Gastrocnemius medialis (tissue), 4 donors: ENCODE measurements at regions of chr17 and their contacts with region 1.

Region 1: GRCh38 chr17:44919885-44920564 is 4.7 kb upstream of the GFAP start:
- DNase-seq: peak; percentile 66 to 73
- ATAC-seq: peak; percentile 91 to 92
- H3K4me3 ChIP-seq: no peak overlapping the region
- H3K27ac ChIP-seq: no peak overlapping the region
- H3K4me1 ChIP-seq: peaks cover 0 to 8% of the 10 kb centered on the region in 2 donors
- H3K27me3 ChIP-seq: no peaks in the 10 kb centered on the region
- CTCF ChIP-seq: peak; percentile 70 to 88 (median 81)
- POLR2A ChIP-seq: no peak

Region 2: DNA sequence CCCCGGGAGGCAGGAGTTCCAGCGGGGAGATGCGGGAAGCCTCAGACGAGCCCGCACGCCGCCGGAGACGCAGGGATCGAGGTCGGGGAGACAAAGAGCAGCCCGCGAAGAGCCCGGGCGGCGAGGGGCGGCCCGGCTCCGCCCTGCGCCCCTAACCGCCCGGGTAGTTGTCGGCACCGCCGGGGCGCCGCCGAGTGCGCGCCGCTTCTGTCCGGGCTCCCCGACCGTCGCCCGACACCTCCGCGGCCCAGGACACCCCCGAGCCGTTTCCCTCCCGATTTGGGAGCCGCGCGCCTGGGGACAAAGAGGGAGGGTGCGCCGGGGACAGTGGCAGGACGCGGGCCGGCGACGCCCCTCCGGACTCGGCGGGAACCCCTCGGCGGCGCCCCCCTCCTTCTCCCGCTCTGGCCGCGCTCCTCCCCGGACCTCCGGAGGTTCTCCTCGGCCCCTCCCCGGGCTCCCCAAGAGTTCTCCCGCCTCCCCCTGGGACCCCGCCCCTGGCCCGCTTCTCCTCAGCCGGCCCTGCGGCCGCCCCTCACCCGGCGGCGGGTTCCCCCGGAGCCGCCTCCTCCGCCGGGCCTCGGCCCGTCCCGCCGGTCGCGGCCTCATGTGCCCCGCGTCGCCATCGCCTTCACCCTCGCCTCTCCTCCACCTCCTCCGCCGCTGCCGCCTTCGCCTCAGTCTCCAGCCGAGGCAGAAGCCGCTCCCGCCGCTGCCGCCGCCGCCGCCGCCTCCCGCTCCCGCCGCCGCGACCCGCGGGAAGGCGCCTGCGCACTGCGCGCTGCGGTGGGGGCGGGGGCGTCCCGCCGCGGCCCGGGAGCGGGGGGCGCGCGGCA is 90.3 kb before region 1 on chr17 and contains the start of gene GJC1:
- in situ Hi-C with region 1: no loop called
- intact Hi-C with region 1: no loop called
- DNase-seq: no peak
- ATAC-seq: no peak
- H3K4me3 ChIP-seq: peak within 1 kb of the TSS; percentile 48 to 56 (median 52)
- H3K27ac ChIP-seq: peak within 1 kb of the TSS; percentile 50 to 66 (median 54)
- H3K4me1 ChIP-seq: peaks cover 0 to 7% of the 10 kb centered on the region in 2 donors
- H3K27me3 ChIP-seq: peaks cover 60 to 78% (median 72%) of the 10 kb centered on the region in 3 donors
- CTCF ChIP-seq: no peak
- POLR2A ChIP-seq: no peak
- total RNA-seq, gene GJC1: 2.1 to 9.2 (median 4.6) TPM

Region 3: DNA sequence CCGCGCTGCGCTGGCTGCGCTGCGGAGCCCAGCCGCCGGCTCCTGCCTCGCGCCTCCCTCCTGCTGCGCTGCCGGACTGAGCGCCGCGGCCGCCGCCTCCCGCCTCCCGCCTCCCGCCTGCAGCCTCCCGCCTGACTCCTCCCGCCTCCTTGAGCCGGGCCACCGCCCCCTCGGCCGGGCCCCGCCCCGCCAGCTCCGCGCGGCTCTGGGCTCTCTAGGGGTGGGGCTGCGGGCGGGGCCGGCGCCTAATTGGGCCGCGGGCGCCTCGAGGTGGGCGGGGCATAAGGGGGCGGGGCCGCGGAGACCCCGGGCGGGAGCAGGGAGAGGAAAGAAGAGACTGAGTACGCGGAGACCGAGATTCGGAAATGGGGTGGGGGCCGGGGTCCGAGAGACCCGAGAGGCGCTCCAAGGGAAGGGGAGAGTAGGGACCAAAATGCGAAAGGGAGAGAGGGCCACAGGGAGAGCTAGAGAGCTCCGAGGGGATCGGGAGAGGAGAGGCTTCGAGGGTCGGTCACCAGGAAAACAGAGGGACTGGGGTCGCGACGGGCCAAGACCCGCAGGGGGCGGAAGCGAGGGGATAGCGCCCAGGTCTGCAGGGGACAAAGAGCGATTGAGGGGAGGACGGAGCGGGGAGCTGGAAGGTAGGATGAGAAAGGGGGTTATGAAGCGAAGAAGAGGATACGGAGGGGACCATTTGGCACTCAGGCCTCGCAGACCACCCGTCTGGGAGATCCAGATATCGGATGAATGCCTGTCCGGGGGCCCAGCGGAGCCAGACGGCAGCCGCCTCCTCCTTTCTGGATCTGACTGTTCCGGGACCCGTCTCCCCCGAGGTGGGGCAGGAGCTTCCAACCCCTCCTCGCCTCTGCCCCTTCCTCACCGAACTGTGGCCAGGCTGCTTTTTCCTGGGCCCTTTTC is 48.5 kb after region 1 on chr17 and contains the start of gene C1QL1:
- in situ Hi-C with region 1: no loop called
- intact Hi-C with region 1: no loop called
- DNase-seq: peak; percentile 74 to 83
- ATAC-seq: peak; percentile 90 to 94
- H3K4me3 ChIP-seq: peak within 1 kb of the TSS; percentile 28 to 68 (median 50)
- H3K27ac ChIP-seq: no peak within 1 kb of the TSS
- H3K4me1 ChIP-seq: peaks cover 0 to 12% of the 10 kb centered on the region in 2 donors
- H3K27me3 ChIP-seq: peaks cover 45 to 53% (median 50%) of the 10 kb centered on the region in 3 donors
- CTCF ChIP-seq: no peak
- POLR2A ChIP-seq: no peak
- total RNA-seq, gene C1QL1: not detected

Region 4: GRCh38 chr17:45021607-45022287 is 101.7 kb after region 1 on chr17:
- in situ Hi-C with region 1: loop called in 3 of 4 experiments (anchors 5 to 10 kb)
- intact Hi-C with region 1: loop called (anchors 1 kb)
- DNase-seq: peak; percentile 23 to 47
- ATAC-seq: peak; percentile 70 to 81
- H3K4me3 ChIP-seq: peak overlapping the region; percentile 50 to 83 (median 54)
- H3K27ac ChIP-seq: peak overlapping the region; percentile 32 to 66 (median 64)
- H3K4me1 ChIP-seq: peaks cover 16 to 17% of the 10 kb centered on the region in 2 donors
- H3K27me3 ChIP-seq: no peaks in the 10 kb centered on the region
- CTCF ChIP-seq: peak; percentile 71 to 97 (median 96)
- POLR2A ChIP-seq: no peak

Region 5: DNA sequence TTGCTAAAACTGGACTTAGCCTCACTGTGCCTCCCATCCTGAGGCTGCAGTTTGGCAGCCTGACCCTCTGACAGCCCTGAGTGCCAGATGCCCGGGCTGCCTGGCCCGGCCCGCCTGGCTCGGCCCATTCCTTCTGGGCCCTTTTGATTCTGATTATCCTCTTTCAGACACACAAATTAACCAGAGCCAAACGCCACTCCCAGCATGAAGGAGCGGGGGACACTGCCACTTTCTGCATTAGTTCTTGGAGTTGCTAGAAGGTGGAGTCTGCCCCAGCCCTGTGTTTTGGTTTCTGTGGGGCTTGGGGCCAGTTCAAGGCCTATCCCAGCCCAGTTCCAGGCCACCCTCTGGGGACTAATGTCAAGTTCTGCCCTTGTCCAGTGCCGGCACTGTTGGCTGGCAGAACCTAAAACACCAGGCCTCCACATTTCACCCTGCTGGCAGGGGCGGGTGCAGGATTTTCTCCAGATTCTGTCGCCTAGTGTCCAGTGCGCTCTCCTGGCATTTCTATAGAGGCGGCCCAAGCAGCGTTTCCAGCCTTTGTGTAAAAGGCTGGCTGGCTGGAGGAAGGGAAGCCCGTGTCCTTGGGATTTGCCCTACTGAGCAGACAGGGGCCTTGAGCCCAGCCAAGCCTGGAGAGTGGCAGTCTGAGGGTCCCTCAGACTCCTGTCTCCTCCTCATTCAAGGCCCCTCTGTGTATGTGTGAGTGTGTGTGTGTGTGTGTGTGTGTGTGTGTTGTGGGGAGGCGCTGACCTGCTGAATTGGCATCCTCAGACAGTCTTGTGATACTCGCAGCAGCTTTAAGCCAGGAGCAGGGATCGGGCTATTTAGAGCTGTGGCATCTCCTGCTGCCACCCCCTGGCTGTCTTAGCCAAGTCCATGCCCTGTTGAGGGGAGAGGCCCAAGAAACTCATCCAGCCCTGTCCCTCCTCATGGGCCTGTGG is 190.9 kb after region 1 on chr17:
- in situ Hi-C with region 1: loop called in 2 of 4 experiments (anchors 10 to 25 kb)
- intact Hi-C with region 1: no loop called
- DNase-seq: peak; percentile 86 to 93
- ATAC-seq: peak; percentile 88 to 89
- H3K4me3 ChIP-seq: no peak overlapping the region
- H3K27ac ChIP-seq: peak overlapping the region; percentile 88 to 96 (median 92)
- H3K4me1 ChIP-seq: peaks cover 55 to 69% of the 10 kb centered on the region in 2 donors
- H3K27me3 ChIP-seq: no peaks in the 10 kb centered on the region
- CTCF ChIP-seq: no peak
- POLR2A ChIP-seq: no peak

Region 6: GRCh38 chr17:45123930-45124796 is 204.1 kb after region 1 on chr17:
- in situ Hi-C with region 1: loop called in 2 of 4 experiments (anchors 25 kb)
- intact Hi-C with region 1: no loop called
- DNase-seq: peak in 1 of 2 donors; percentile 56
- ATAC-seq: peak in 1 of 2 donors; percentile 41
- H3K4me3 ChIP-seq: no peak overlapping the region
- H3K27ac ChIP-seq: peak overlapping the region; percentile 46 to 69 (median 56)
- H3K4me1 ChIP-seq: peaks cover 53 to 54% of the 10 kb centered on the region in 2 donors
- H3K27me3 ChIP-seq: no peaks in the 10 kb centered on the region
- CTCF ChIP-seq: no peak
- POLR2A ChIP-seq: no peak

Region 7: GRCh38 chr17:45197555-45198334 is 277.7 kb after region 1 on chr17:
- in situ Hi-C with region 1: no loop called
- intact Hi-C with region 1: loop called (anchors 10 kb)
- DNase-seq: peak; percentile 84 to 90
- ATAC-seq: peak; percentile 88
- H3K4me3 ChIP-seq: no peak overlapping the region
- H3K27ac ChIP-seq: peak overlapping the region; percentile 60 to 65 (median 63)
- H3K4me1 ChIP-seq: peaks cover 5 to 6% of the 10 kb centered on the region in 2 donors
- H3K27me3 ChIP-seq: no peaks in the 10 kb centered on the region
- CTCF ChIP-seq: peak; percentile 99 to 100 (median 99)
- POLR2A ChIP-seq: no peak